ENCODE measurements at regions of chr21 and their contacts with region 1.

Region 1: DNA sequence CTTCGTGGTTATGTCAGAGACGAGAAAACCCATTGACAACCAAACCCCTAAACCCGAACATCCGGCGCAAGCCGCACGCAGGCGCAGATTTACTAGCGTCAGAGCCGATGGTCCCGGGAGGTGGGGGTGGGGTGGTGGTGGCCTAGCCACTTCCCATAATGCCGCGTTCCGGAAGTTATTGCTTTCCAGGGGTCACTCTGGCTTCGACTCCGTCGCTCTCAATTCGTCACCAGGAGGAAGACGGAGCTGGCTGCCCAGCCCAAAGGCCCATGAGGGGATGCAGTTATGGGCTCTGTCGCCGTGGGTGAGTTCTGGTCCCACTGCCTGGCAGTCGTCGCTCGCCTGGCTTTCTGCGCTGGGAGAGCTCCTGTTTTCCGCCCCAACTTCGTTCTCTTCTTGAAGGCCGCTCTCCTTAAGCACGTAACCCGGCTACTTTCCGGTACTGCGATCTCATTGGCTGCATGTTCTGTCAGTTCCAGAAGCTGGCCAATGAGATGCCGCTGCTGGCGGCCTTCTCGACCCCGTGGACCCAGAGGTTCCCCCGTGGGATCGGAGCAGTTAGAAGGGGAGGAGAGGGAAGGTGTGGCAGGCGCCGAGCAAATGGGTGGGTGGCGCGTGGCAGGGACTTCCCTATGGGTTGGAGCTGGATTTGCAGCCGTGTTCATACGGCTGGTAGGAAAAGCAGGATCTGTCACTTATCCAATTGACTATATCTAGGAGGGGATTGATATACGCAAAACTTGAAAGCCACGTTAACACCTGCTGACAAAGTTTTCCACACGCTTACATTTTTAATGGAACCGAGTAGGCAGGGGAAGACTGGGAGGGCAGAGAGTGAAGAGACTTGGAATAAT is at the start of gene USP16:
- DNase-seq: peak; percentile 96 to 98 (median 97)
- H3K4me3 ChIP-seq: peak within 1 kb of the TSS; percentile 57 to 71
- H3K4me3 Mint-ChIP-seq: peak within 1 kb of the TSS; percentile 96 to 99 (median 98)
- H3K27ac ChIP-seq: peak within 1 kb of the TSS; percentile 99
- H3K27ac Mint-ChIP-seq: peak within 1 kb of the TSS; percentile 97 to 100 (median 100)
- H3K4me1 ChIP-seq: peaks cover 59% of the 10 kb centered on the region
- H3K4me1 Mint-ChIP-seq: peaks cover 34 to 76% (median 57%) of the 10 kb centered on the region in 4 donors
- H3K27me3 ChIP-seq: no peaks in the 10 kb centered on the region
- H3K27me3 Mint-ChIP-seq: no peaks in the 10 kb centered on the region
- total RNA-seq, gene USP16: 53.5 to 57.2 TPM

Region 2: DNA sequence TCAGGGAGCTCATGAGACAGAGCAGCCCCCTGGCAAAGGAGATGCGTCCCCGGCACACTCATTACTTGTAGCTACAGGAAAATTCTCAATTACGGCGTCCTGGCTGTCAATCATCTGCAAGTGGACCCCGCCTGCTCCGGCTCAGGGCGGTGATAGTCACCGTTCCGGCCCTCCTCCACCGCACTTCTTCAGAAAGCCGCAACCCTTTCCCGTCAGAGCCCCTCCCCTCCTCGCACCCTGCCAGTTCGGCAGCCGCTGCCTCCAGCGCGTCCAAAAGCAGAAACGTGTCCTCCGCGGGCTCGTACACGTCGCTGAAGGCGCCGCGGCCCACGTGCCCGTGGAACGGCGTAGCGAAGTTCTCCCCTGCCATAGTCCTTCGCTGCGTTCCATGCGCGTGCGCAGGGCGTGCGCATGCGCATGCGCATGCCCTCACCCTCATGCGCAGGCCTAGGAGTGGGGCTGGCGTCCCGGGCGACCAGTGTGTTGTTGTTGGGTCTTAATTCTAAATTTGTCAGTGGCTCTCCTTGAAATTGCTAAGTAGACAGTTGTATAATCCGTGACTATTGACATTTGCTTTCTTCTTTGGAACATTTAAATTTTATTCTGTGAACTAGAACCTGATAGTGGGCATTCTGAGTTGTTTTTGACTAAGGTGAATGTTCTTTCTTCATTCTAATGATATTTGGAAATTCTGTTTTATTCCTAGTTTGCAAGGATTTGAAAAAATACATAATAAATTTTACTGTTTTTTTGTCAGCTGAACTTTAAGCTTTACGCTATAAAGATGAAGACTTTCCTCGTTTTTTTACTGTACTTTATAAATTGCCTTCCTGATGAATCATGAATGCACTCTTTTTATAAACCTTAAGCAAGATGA is 139.5 kb before region 1 on chr21:
- CTCF ChIA-PET with region 1: no interaction called
- POLR2A ChIA-PET with region 1: interaction called, 8 read pairs
- intact Hi-C with region 1: loop called (anchors 1 kb)
- DNase-seq: peak; percentile 92 to 95 (median 95)
- H3K4me3 ChIP-seq: peak overlapping the region; percentile 10 to 70
- H3K4me3 Mint-ChIP-seq: peak overlapping the region; percentile 92 to 98 (median 96)
- H3K27ac ChIP-seq: peak overlapping the region; percentile 87
- H3K27ac Mint-ChIP-seq: peak overlapping the region; percentile 95 to 99 (median 98)
- H3K4me1 ChIP-seq: peaks cover 20% of the 10 kb centered on the region
- H3K4me1 Mint-ChIP-seq: peaks cover 15 to 31% (median 19%) of the 10 kb centered on the region in 4 donors
- H3K27me3 ChIP-seq: no peaks in the 10 kb centered on the region
- H3K27me3 Mint-ChIP-seq: peaks cover 0 to 1% of the 10 kb centered on the region in 2 donors

Region 3: DNA sequence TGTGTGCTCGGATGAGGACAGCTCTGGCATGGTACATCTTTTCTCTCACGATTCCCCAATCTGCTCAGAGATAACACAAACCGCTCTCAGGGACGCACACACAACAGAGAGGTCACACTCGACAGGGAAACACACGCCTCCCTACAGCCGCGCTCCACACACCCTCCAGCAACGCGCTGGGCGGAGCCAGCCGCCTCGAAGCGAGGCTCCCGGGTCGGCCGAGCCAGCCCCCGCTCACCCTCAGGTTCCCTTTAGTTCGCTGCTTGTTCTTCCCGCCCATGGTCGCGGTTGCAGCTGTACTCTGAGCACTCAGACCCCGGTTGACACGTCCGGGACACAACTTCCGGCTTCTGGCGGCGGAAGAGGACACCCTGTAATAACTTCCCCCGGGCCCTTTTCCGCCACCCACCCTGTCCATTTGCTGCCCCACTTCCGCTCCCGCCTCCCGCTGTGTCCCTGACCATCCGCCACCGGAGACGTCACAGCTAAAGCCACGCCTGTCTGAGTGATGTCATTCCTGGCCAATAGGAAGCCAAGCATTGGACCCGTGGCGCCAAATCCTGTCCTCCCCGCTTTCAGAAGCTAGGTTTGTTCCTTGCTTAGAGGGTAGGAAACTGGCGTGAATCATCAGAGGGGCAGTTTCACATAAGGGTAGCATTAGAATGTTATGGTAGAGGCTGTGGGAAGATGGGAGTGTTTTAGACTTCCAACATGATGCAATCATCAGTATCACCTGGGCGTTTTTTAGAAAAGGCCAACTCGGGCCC is 32.0 kb before region 1 on chr21 and contains the start of gene LTN1:
- CTCF ChIA-PET with region 1: interaction called, 15 read pairs
- POLR2A ChIA-PET with region 1: interaction called, 107 read pairs
- intact Hi-C with region 1: loop called (anchors 1 kb)
- DNase-seq: peak; percentile 98 to 99 (median 99)
- H3K4me3 ChIP-seq: peak within 1 kb of the TSS; percentile 87 to 98
- H3K4me3 Mint-ChIP-seq: peak within 1 kb of the TSS; percentile 90 to 98 (median 96)
- H3K27ac ChIP-seq: peak within 1 kb of the TSS; percentile 82
- H3K27ac Mint-ChIP-seq: peak within 1 kb of the TSS; percentile 85 to 100 (median 99)
- H3K4me1 ChIP-seq: peaks cover 31% of the 10 kb centered on the region
- H3K4me1 Mint-ChIP-seq: peaks cover 24 to 54% (median 36%) of the 10 kb centered on the region in 4 donors
- H3K27me3 ChIP-seq: no peaks in the 10 kb centered on the region
- H3K27me3 Mint-ChIP-seq: no peaks in the 10 kb centered on the region
- total RNA-seq, gene LTN1: 34.6 to 39.5 TPM

Region 4: GRCh38 chr21:29002442-29003144 is 22.1 kb before region 1 on chr21:
- CTCF ChIA-PET with region 1: interaction called, 16 read pairs
- POLR2A ChIA-PET with region 1: interaction called, 383 read pairs
- intact Hi-C with region 1: loop called (anchors 1 kb)
- DNase-seq: peak; percentile 91 to 97 (median 95)
- H3K4me3 ChIP-seq: peak overlapping the region; percentile 85 to 88
- H3K4me3 Mint-ChIP-seq: peak overlapping the region; percentile 89 to 95 (median 92)
- H3K27ac ChIP-seq: peak overlapping the region; percentile 95
- H3K27ac Mint-ChIP-seq: peak overlapping the region; percentile 98 to 99 (median 99)
- H3K4me1 ChIP-seq: peaks cover 8% of the 10 kb centered on the region
- H3K4me1 Mint-ChIP-seq: peaks cover 2 to 14% (median 6%) of the 10 kb centered on the region in 4 donors
- H3K27me3 ChIP-seq: no peaks in the 10 kb centered on the region
- H3K27me3 Mint-ChIP-seq: no peaks in the 10 kb centered on the region

Region 5: DNA sequence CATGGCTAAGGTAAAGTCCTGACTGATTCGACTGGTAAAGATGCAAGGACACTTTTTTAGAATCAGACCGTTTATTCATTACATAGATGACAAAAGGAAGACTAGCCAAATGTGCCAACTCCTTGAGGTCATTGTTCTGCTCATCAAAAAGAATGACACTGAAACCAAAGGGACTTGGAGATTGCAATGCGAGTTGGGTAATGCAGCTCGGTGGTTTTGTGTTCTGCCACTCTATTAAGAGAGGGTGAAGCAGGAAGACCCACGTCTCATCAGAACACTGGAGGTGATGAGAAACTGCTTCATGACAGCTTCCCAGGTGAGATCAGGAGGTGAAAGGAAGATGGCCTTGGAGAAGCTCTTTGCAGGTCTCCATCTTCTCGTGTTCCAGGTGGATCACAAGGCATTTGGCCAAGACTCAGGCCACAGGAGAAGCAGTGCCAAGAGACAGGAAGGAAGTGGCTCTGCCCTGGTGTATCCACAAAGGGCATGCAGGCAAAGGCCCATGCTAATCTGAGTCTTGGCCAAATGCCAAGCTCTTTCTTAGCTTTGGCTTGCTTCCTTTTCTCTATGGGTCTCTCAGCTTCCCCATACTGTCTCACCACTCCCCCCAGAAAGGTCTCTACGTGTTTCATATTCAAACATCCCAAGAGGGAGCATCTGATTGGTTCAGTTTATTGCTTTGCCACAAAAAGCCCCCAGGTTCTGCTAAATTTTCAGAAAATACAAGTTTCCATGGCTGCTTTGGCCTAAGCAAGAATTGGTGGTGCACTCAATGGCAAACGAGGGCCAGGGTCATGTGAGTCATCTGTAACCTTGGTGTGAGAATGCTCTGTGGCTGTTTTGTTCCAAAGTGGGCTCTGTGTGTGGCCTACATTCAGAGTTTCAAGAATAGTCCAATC is 54.4 kb after region 1 on chr21:
- CTCF ChIA-PET with region 1: interaction called, 4 read pairs
- POLR2A ChIA-PET with region 1: interaction called, 70 read pairs
- intact Hi-C with region 1: no loop called
- DNase-seq: peak; percentile 37 to 44 (median 40)
- H3K4me3 ChIP-seq: no peak overlapping the region
- H3K4me3 Mint-ChIP-seq: peak overlapping the region; percentile 37 to 79 (median 70)
- H3K27ac ChIP-seq: peak overlapping the region; percentile 33
- H3K27ac Mint-ChIP-seq: peak overlapping the region; percentile 88 to 95 (median 93)
- H3K4me1 ChIP-seq: peaks cover 53% of the 10 kb centered on the region
- H3K4me1 Mint-ChIP-seq: peaks cover 22 to 71% (median 48%) of the 10 kb centered on the region in 4 donors
- H3K27me3 ChIP-seq: no peaks in the 10 kb centered on the region
- H3K27me3 Mint-ChIP-seq: no peaks in the 10 kb centered on the region

Region 6: GRCh38 chr21:29217818-29218291 is 193.2 kb after region 1 on chr21:
- CTCF ChIA-PET with region 1: no interaction called
- POLR2A ChIA-PET with region 1: no interaction called
- intact Hi-C with region 1: no loop called
- DNase-seq: no peak
- H3K4me3 ChIP-seq: no peak overlapping the region
- H3K4me3 Mint-ChIP-seq: no peak overlapping the region
- H3K27ac ChIP-seq: no peak overlapping the region
- H3K27ac Mint-ChIP-seq: no peak overlapping the region
- H3K4me1 ChIP-seq: no peaks in the 10 kb centered on the region
- H3K4me1 Mint-ChIP-seq: no peaks in the 10 kb centered on the region
- H3K27me3 ChIP-seq: no peaks in the 10 kb centered on the region
- H3K27me3 Mint-ChIP-seq: peaks cover 0 to 2% of the 10 kb centered on the region in 2 donors